ENCODE measurements at regions of chr1 and their contacts with region 1.

Region 1: DNA sequence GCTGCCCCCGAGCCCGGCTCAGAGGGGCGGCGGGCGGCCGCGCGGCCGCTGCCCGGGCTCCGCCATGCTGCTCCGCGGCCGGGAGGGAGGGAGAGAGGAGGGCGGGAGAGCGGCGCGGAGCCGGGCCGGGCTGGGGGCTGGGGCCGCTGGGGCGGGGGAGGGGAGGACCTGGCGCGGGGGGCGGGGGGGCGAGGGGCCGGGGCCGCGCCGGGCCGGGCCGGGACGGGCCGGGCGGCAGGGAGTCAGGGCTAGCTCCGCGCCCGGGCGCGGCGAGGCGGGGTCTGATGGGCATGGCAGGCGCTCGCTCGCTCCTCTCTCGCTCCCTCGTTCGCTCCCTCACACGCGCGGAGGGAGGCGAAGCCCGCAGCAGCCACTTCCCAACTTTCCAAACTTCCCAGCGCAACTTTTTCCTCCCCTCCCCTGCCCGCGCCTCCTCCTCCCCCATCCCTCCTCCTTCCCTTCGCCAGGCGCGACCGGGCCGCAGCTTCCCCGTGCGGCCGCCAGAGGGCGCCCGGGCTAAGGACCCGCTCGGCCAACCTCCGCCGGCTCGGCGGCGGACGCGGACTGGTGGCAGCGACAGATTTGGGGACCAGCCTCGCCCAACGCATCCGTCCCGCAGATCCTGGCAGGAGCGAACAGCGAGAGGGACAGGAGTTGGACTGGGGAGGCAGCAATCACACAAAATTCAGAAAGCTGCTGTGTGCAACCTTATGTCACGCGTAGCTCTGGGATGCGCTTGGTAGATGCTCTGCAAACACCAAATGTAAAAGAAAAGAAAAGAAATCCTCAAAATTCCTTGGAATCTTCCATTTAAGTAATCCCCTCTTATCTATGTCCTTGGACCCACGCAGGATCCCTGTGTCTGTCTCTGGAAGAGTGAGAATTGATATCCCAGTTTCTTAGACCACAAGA is at the start of gene TRABD2B:
- DNase-seq: peak; percentile 69
- H3K4me3 ChIP-seq: peak within 1 kb of the TSS; percentile 57 to 75 (median 69)
- H3K27ac ChIP-seq: no peak within 1 kb of the TSS
- H3K4me1 ChIP-seq: peaks cover 23% of the 10 kb centered on the region
- H3K27me3 ChIP-seq: no peaks in the 10 kb centered on the region
- CTCF ChIP-seq: peak; percentile 55 to 96
- total RNA-seq, gene TRABD2B: 1.2 TPM

Region 2: GRCh38 chr1:47738560-47739182 is 258.9 kb before region 1 on chr1:
- CTCF ChIA-PET with region 1: interaction called, 5 read pairs
- dilution Hi-C with region 1: no loop called
- in situ Hi-C with region 1: no loop called
- intact Hi-C with region 1: loop called (anchors 2 kb)
- DNase-seq: peak; percentile 32
- H3K4me3 ChIP-seq: no peak overlapping the region
- H3K27ac ChIP-seq: no peak overlapping the region
- H3K4me1 ChIP-seq: no peaks in the 10 kb centered on the region
- H3K27me3 ChIP-seq: no peaks in the 10 kb centered on the region
- CTCF ChIP-seq: peak; percentile 76 to 89

Region 3: DNA sequence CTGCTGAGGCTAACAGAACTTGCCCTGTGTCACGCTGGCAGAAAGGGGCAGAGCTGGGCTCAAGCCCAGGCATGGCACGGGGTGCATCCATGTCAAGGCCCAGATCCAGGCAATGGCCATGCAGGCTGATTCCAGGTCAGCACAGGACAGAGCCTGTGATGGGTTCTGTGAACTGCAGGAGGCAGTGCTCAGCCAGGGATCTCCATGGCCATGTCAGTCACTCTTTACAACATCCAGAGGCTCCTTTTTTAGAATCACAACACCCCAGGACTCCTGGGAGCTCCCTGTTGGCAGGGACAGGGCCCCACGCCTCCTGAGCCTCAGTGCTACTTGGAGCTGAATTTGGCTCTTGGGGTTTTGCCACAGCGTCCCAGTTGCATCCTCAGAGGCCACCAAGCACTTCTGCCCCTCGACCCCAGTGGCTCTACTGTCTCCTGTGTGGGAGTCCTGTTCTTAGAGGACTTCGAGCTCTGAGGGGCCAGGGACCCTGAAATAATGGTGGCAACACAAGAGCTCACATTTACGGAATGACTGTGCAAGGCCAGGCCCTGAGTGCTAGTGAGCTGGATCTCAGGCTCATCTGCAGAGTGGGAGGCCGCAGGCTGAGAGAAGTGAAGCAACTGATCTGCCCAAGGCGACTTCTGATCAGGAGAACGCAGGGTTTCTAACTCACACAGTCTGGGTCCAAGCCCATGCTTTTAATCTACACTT is 211.8 kb before region 1 on chr1:
- CTCF ChIA-PET with region 1: no interaction called
- dilution Hi-C with region 1: no loop called
- in situ Hi-C with region 1: no loop called
- intact Hi-C with region 1: loop called (anchors 1 kb)
- DNase-seq: peak; percentile 6
- H3K4me3 ChIP-seq: no peak overlapping the region
- H3K27ac ChIP-seq: no peak overlapping the region
- H3K4me1 ChIP-seq: no peaks in the 10 kb centered on the region
- H3K27me3 ChIP-seq: no peaks in the 10 kb centered on the region
- CTCF ChIP-seq: peak; percentile 22 to 52

Region 4: DNA sequence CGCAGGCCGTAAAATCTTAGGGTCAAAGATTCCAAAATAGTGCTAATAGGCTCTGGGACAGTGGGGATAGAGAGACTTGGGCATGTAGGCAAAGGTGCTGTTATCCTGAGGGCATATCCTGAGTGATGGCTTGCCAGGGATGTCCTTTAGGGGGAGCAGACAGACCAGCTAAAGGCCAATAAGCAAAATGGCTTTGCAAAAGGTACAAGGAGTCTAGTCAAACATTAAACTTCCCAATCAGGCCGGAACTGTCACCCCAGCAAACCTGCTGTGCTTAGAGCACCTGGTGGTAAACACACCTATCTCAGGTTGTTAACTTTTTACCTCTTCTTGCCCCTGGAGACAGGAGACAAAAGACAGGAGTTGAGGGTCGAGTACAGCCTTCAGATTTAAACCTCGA is 49.4 kb before region 1 on chr1:
- CTCF ChIA-PET with region 1: no interaction called
- dilution Hi-C with region 1: no loop called
- in situ Hi-C with region 1: no loop called
- intact Hi-C with region 1: loop called (anchors 2 kb)
- DNase-seq: peak; percentile 27
- H3K4me3 ChIP-seq: no peak overlapping the region
- H3K27ac ChIP-seq: no peak overlapping the region
- H3K4me1 ChIP-seq: peaks cover 12% of the 10 kb centered on the region
- H3K27me3 ChIP-seq: no peaks in the 10 kb centered on the region
- CTCF ChIP-seq: peak; percentile 33 to 40

Region 5: DNA sequence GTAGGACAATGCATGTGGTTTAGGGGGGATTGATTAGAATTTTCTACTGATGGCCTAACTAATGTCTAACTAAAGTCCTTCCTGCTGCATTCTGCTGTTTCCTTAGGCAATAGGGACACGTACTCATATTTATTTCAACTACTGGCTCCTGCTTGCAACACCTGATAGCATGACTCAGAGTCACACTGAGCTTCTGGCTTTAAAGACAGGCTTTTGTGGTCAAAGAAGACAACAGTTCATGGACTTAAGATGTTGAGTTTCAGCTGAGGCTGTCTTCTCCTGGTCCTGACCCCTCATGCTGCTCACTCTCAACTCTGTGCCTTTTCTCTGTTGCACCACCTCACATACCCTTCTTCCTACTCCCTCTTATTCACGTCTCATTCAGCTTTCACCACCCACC is 28.7 kb after region 1 on chr1:
- CTCF ChIA-PET with region 1: interaction called, 3 read pairs
- dilution Hi-C with region 1: no loop called
- in situ Hi-C with region 1: no loop called
- intact Hi-C with region 1: loop called (anchors 2 kb)
- DNase-seq: peak; percentile 97
- H3K4me3 ChIP-seq: no peak overlapping the region
- H3K27ac ChIP-seq: peak overlapping the region; percentile 33
- H3K4me1 ChIP-seq: peaks cover 25% of the 10 kb centered on the region
- H3K27me3 ChIP-seq: no peaks in the 10 kb centered on the region
- CTCF ChIP-seq: no peak

Region 6: GRCh38 chr1:48236716-48237470 is 239.3 kb after region 1 on chr1:
- CTCF ChIA-PET with region 1: no interaction called
- dilution Hi-C with region 1: no loop called
- in situ Hi-C with region 1: no loop called
- intact Hi-C with region 1: loop called (anchors 2 kb)
- DNase-seq: peak; percentile 34
- H3K4me3 ChIP-seq: no peak overlapping the region
- H3K27ac ChIP-seq: no peak overlapping the region
- H3K4me1 ChIP-seq: no peaks in the 10 kb centered on the region
- H3K27me3 ChIP-seq: no peaks in the 10 kb centered on the region
- CTCF ChIP-seq: peak; percentile 77 to 86

Region 7: DNA sequence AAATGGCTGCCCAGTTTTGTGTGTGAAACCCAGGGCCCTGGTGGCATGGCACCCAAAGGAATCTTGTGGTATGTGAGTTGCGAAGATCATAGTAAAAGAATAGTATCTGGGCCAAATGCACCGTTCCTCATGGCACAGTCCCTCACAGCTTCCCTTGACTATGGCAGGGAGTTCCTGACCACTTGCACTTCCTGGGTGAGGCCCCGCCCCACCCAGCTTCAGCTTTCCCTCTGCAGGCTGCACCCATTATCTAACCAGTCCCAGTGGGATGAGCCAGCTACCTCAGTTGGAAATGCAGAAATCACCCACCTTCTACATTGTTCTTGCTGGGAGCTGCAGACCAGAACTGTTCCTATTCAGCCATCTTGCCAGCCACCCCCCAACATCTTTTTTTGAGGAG is 288.0 kb after region 1 on chr1:
- CTCF ChIA-PET with region 1: no interaction called
- dilution Hi-C with region 1: no loop called
- in situ Hi-C with region 1: no loop called
- intact Hi-C with region 1: no loop called
- DNase-seq: no peak
- H3K4me3 ChIP-seq: no peak overlapping the region
- H3K27ac ChIP-seq: no peak overlapping the region
- H3K4me1 ChIP-seq: no peaks in the 10 kb centered on the region
- H3K27me3 ChIP-seq: no peaks in the 10 kb centered on the region
- CTCF ChIP-seq: no peak

Region 8: GRCh38 chr1:48500541-48501450 is 503.3 kb after region 1 on chr1:
- CTCF ChIA-PET with region 1: no interaction called
- dilution Hi-C with region 1: no loop called
- in situ Hi-C with region 1: no loop called
- intact Hi-C with region 1: no loop called
- DNase-seq: no peak
- H3K4me3 ChIP-seq: no peak overlapping the region
- H3K27ac ChIP-seq: no peak overlapping the region
- H3K4me1 ChIP-seq: no peaks in the 10 kb centered on the region
- H3K27me3 ChIP-seq: no peaks in the 10 kb centered on the region
- CTCF ChIP-seq: no peak

Measured in mammary epithelial cell (primary cell).